Mammary epithelial cell (primary cell): ENCODE measurements at regions of chr16 and their contacts with region 1.

Region 1: DNA sequence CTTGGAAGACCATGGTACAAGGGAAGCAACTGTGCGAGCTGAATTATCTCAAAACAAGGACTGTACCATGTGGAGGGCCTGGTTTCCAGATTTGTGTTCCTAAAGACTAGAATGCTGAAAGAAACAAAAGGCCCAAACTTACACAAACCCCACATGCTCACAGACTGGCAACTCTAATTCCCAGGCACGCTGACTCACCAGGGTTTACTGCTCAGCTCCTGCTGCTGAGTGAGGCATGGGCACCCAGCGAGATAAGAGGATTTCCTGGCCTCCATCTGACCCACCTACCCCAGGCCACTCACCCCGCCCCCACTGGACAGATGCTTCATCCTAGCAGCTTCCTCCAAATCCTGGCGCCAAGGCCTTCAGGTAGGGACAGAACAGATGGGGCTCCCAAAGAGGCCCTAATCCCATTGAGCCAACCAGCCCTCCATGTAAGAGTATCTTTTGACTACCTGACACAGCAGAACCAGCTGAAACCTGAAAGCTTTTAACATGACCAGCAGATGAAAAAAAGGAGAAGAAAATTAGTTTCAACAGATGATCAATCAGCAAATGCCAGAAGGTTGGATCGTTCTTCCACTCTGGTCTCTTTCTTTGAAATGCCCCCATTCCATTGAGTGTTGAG is 33.9 kb downstream of the DCUN1D3 start:
- DNase-seq: peak; percentile 88
- H3K4me3 ChIP-seq: peak overlapping the region in 2 of 3 experiments; percentile 2 to 17
- H3K27ac ChIP-seq: peak overlapping the region; percentile 97
- H3K4me1 ChIP-seq: peaks cover 62% of the 10 kb centered on the region
- H3K27me3 ChIP-seq: no peaks in the 10 kb centered on the region
- CTCF ChIP-seq: no peak

Region 2: GRCh38 chr16:20910781-20911321 is 44.6 kb after region 1 on chr16:
- CTCF ChIA-PET with region 1: no interaction called
- dilution Hi-C with region 1: loop called (anchors 10 kb)
- in situ Hi-C with region 1: no loop called
- intact Hi-C with region 1: loop called (anchors 2 kb)
- DNase-seq: peak; percentile 96
- H3K4me3 ChIP-seq: no peak overlapping the region
- H3K27ac ChIP-seq: peak overlapping the region; percentile 98
- H3K4me1 ChIP-seq: peaks cover 49% of the 10 kb centered on the region
- H3K27me3 ChIP-seq: no peaks in the 10 kb centered on the region
- CTCF ChIP-seq: no peak